H1 (cell line): ENCODE measurements at regions of chr17 and their contacts with region 1.

Region 1: DNA sequence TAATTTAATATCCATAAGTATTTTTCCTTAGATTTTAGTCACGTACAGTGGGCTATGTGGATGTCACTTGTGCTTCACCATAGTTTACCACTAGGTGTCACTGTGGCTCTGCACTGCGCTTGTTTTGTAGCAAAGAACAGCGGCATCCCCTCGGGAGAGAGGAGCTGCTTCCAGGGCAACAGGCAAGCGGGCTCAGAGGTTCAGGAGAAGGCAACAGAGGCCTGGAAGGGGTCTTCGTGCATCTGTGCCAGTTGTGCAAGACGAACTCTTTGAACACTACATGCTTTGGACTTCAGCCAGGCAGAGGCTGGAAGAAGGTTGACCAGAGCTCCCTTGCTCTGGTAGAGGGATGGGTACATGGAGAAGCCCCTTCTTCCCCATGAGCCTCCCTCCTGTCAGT is 20.6 kb downstream of the CYB561 start:
- DNase-seq: peak in 1 of 2 experiments; percentile 81
- H3K4me3 ChIP-seq: no peak overlapping the region
- H3K27ac ChIP-seq: no peak overlapping the region
- H3K4me1 ChIP-seq: peaks cover 2 to 8% (median 4%) of the 10 kb centered on the region in 4 experiments; a peak in 6 of 7 replicates
- H3K27me3 ChIP-seq: no peaks in the 10 kb centered on the region
- CTCF ChIP-seq: peak; percentile 60 to 91 (median 86)
- EP300 ChIP-seq: no peak
- POLR2A ChIP-seq: no peak
- RAD21 ChIP-seq: peak; percentile 98 to 99

Region 2: DNA sequence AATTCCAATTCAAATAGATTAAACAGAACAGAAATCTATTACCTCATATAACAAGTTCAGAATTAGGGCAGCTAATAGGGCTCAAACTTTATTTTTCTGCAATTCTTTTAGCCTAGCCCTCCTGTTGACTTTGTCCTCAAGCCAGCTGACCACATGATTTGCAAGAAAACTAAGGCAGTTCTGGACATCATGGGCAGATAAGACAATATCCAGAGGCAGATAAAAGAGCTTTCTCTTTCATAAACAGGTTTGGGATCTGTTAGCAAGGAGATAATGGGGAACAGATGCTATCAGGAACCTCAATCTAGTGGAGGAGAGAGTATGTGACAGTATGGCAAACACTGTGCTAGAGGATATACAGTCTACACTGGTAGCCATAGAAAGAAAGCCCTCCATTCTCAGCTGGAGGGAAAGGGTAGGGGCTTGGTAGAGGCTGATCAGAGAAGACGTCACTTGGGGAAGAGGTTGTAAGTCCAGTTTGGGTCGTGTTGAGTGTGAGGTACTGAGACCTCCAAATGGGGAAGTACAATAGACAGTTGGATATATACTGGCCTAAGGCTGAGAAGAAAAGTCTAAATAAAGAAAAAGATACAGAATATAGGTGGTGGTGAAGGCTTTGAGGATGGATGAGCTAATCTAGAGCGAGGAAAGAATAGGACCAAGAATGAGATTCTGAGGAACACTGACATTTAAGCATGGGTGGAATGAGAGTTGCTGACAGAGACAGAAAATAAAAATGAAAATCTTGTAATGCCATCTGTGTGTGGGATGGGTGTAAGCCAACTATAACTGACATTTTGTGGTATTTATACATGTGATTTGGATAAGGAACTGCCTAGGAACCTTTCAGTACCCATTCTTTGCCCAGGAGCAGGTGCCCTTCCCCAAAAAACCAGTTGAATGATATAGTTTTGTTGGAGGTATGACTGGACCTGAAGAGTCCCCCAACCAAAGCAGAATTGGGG is 46.8 kb before region 1 on chr17:
- CTCF ChIA-PET with region 1: no interaction called
- POLR2A ChIA-PET with region 1: no interaction called
- DNase-seq: no peak
- H3K4me3 ChIP-seq: no peak overlapping the region
- H3K27ac ChIP-seq: no peak overlapping the region
- H3K4me1 ChIP-seq: no peaks in the 10 kb centered on the region
- H3K27me3 ChIP-seq: no peaks in the 10 kb centered on the region
- CTCF ChIP-seq: no peak
- EP300 ChIP-seq: no peak
- POLR2A ChIP-seq: no peak
- RAD21 ChIP-seq: no peak

Region 3: DNA sequence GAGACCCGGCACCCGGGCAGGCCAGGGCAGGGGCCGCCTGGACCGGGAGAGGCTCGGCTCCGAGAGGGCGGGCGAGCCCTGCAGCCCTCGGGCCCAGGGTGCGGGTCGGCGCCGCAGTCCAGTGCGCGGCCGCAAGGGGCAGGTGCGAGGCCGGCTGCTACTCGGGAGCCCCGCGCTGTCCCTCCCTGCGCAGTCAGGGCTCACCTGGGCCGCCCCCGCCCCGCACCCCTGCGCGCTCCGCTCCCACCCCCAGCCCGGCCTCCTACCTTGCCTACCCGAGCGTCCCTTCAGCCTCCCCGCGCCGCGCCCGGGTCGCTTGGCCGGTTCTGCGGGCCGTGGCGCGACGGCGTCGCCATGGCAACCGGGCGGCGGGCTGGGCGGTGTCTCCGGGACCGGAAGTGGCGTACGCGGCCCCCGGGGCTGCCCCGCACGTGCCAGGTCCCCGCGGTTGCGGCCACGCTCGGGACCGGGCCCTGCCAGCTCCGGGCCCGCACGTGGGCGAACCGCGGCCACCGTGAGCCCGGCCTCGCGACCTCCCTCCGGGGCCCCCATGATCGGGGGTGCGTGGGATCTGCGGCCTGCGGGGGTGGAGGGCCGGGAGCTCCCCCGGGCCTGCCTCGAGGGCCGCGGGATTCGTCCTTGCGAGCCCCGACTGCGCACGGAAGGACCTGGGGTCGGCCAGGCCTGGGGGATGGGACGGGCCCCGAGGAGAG is 20.7 kb after region 1 on chr17 and contains the start of gene CYB561:
- CTCF ChIA-PET with region 1: interaction called, 415 read pairs
- POLR2A ChIA-PET with region 1: interaction called, 4 read pairs
- DNase-seq: peak in 1 of 2 experiments; percentile 92
- H3K4me3 ChIP-seq: peak within 1 kb of the TSS; percentile 49 to 74 (median 55)
- H3K27ac ChIP-seq: no peak within 1 kb of the TSS; the same call in 1 of the 2 replicates
- H3K4me1 ChIP-seq: peaks cover 0 to 20% (median 10%) of the 10 kb centered on the region in 4 experiments; a peak in 6 of 7 replicates
- H3K27me3 ChIP-seq: peaks cover 0 to 10% (median 2%) of the 10 kb centered on the region in 4 experiments; a peak in 2 of 7 replicates
- CTCF ChIP-seq: peak; percentile 56 to 86 (median 68)
- EP300 ChIP-seq: no peak
- POLR2A ChIP-seq: peak in 1 of 2 experiments; percentile 37; a peak in 1 of 3 replicates
- RAD21 ChIP-seq: peak; percentile 20 to 39; a peak in 2 of 4 replicates
- total RNA-seq, gene CYB561: 23.4 and 26.0 TPM in 2 replicates

Region 4: DNA sequence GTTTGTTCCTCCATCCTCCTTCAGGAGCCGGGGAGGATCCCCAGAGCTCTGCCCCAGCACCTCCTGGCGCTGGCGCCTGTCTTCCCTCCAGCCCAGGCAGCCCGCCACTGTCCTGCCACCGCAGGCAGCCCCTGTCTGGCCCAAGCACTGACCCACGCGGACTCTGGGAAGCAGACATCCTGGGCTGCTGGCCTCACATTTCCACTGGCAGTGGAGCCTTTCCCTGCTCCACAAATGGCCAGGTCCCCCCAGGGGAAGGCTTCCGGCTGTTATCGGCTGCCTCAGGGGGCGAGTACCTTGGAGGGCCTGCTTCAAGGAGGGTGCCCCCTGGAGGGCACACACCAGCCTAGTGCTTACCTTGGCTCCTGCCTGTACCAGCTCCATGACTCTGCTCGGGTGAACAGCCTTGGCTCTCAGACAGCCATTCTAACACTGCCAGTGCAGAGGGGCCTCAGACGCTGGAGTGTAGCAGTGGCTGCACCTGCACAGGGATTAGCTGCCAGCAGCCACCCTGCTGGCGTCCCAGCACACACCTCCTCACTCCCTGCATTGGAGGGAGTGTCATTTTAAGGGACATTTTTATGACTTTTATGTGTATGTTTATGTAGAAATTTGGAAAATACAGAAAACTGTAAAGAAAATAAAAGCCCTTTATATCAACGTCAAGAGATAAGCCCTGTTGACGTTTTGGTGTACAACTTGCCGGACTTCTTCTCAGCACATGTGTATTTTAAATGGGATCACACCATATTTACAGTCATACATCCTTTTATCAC is 72.4 kb after region 1 on chr17:
- CTCF ChIA-PET with region 1: interaction called, 11 read pairs
- POLR2A ChIA-PET with region 1: interaction called, 3 read pairs
- DNase-seq: peak in 1 of 2 experiments; percentile 81
- H3K4me3 ChIP-seq: no peak overlapping the region
- H3K27ac ChIP-seq: no peak overlapping the region
- H3K4me1 ChIP-seq: peaks cover 0 to 6% (median 0%) of the 10 kb centered on the region in 4 experiments; a peak in 1 of 7 replicates
- H3K27me3 ChIP-seq: no peaks in the 10 kb centered on the region
- CTCF ChIP-seq: peak; percentile 39 to 61 (median 51)
- EP300 ChIP-seq: no peak
- POLR2A ChIP-seq: no peak
- RAD21 ChIP-seq: peak; percentile 12 to 38; a peak in 3 of 4 replicates

Region 5: GRCh38 chr17:63579540-63580001 is 154.1 kb after region 1 on chr17:
- CTCF ChIA-PET with region 1: interaction called, 27 read pairs
- POLR2A ChIA-PET with region 1: interaction called, 3 read pairs
- DNase-seq: no peak
- H3K4me3 ChIP-seq: no peak overlapping the region
- H3K27ac ChIP-seq: peak overlapping the region; percentile 6
- H3K4me1 ChIP-seq: peaks cover 0 to 6% (median 3%) of the 10 kb centered on the region in 4 experiments; a peak in 4 of 7 replicates
- H3K27me3 ChIP-seq: no peaks in the 10 kb centered on the region
- CTCF ChIP-seq: no peak
- EP300 ChIP-seq: no peak
- POLR2A ChIP-seq: no peak
- RAD21 ChIP-seq: no peak

Region 6: DNA sequence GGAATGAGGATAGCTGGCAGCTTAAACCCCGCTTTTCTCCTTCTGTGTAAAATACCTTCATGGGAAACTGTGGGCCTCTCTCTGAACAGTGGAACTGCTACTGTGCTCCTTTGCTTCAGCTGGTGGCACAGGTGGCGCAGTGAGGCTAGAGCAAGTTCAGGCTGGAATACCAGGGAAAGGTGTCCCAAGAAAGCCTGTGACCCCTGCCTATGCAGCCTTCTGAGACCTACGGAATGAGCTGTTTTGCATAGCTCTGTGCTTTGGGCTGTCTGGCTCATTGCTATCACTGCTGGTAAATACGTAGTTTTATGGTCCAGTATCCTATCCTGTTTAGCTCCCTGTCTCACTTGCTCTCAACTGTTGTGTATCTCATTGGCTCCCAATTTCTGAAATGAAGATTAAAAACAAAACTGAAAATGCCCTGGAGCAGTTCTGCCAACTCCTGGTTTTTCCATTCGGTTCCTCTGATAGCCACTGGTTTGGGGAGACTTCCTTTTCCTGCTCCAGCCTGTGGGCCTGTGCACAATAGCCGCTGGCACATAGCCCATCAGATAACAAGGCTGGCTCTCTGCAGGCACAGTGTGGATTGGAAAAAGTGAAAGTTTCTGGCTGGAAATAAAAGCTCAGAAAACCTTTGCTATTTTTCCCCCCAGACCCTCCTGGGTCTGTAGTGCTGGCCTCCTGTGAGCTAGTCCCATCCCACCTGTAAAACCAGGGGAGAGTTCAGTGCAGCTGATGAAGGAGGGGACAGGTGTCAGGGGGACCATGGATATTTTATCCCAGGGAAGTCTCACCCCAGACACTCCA is 250.3 kb after region 1 on chr17:
- CTCF ChIA-PET with region 1: interaction called, 19 read pairs
- POLR2A ChIA-PET with region 1: no interaction called
- DNase-seq: no peak
- H3K4me3 ChIP-seq: no peak overlapping the region
- H3K27ac ChIP-seq: no peak overlapping the region
- H3K4me1 ChIP-seq: peaks cover 3 to 13% (median 6%) of the 10 kb centered on the region in 4 experiments; a peak in 6 of 7 replicates
- H3K27me3 ChIP-seq: no peaks in the 10 kb centered on the region
- CTCF ChIP-seq: no peak
- EP300 ChIP-seq: no peak
- POLR2A ChIP-seq: no peak
- RAD21 ChIP-seq: no peak